Sigmoid colon (tissue), 7 donors: ENCODE measurements at regions of chr6 and their contacts with region 1.

Region 1: GRCh38 chr6:797479-798077 is 104.6 kb upstream of the EXOC2 start:
- DNase-seq: no peak
- H3K4me3 ChIP-seq: no peak overlapping the region
- H3K27ac ChIP-seq: no peak overlapping the region
- H3K4me1 ChIP-seq: no peaks in the 10 kb centered on the region
- H3K27me3 ChIP-seq: peaks cover 3 to 25% (median 9%) of the 10 kb centered on the region in 3 donors
- CTCF ChIP-seq: peak; percentile 32 to 78 (median 73)
- EP300 ChIP-seq: no peak
- POLR2A ChIP-seq: no peak

Region 2: GRCh38 chr6:827431-827830 is 29.9 kb after region 1 on chr6:
- intact Hi-C with region 1: no loop called
- DNase-seq: no peak
- H3K4me3 ChIP-seq: no peak overlapping the region
- H3K27ac ChIP-seq: no peak overlapping the region
- H3K4me1 ChIP-seq: no peaks in the 10 kb centered on the region
- H3K27me3 ChIP-seq: no peaks in the 10 kb centered on the region
- CTCF ChIP-seq: no peak
- EP300 ChIP-seq: no peak
- POLR2A ChIP-seq: no peak

Region 3: DNA sequence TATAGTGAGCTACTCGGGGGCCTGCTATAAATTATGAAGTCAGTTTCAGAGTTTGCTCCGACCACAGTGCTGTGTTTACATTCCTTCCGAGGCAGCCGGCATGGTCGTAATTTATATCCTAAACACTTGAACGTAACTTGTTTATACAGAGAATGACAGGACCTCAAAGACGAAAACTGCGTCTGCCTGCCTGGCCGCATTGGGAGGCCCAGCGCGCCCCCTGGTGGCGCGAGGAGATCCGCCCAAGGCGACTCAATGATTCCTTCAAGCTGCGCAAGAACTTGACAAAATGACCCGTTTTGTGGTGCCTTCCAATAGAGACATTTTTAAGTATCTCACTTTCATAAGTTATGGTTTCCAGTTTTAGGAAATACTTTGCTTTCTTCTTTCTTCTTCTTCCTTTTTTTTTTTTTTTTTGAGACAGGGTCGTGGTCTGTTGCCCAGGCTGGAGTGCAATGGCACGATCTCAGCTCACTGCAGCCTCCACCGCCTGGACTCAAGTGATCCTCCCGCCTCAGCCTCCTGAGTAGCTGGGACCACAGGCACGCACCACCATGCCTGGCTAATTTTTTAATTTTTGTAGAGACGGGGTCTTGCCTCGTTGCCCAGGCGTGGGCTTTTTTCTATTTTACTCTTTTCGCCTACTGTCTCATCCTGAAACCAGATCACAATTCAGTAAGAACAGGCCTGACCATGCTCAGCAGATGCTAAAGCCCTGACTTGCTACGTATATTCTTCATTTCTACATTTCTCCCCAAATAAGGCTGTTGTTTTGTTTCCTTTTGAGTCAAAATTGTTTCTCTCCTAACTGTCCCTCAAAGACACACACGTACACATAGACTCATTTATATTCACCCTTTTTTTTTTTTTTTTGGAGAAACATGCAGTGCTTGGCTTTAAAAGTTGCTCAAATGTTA is 599.6 kb after region 1 on chr6:
- intact Hi-C with region 1: loop called (anchors 2 kb)
- DNase-seq: peak; percentile 89
- H3K4me3 ChIP-seq: peak overlapping the region in 1 of 4 donors; percentile 68
- H3K27ac ChIP-seq: peak overlapping the region; percentile 84 to 96 (median 89)
- H3K4me1 ChIP-seq: peaks cover 0 to 24% (median 13%) of the 10 kb centered on the region in 4 donors
- H3K27me3 ChIP-seq: peaks cover 0 to 65% (median 20%) of the 10 kb centered on the region in 3 donors
- CTCF ChIP-seq: peak; percentile 75 to 93 (median 89)
- EP300 ChIP-seq: peak in 3 of 4 donors; percentile 66 to 92 (median 88)
- POLR2A ChIP-seq: no peak

Region 4: GRCh38 chr6:1436334-1437306 is 639.0 kb after region 1 on chr6:
- intact Hi-C with region 1: loop called (anchors 5 kb)
- DNase-seq: no peak
- H3K4me3 ChIP-seq: no peak overlapping the region
- H3K27ac ChIP-seq: no peak overlapping the region
- H3K4me1 ChIP-seq: peaks cover 0 to 7% (median 6%) of the 10 kb centered on the region in 4 donors
- H3K27me3 ChIP-seq: peaks cover 0 to 19% (median 0%) of the 10 kb centered on the region in 3 donors
- CTCF ChIP-seq: peak in 3 of 4 experiments; percentile 71 to 80 (median 73)
- EP300 ChIP-seq: no peak
- POLR2A ChIP-seq: no peak